Activated naive CD4-positive, alpha-beta T cell treated with anti-CD3 and anti-CD28 coated beads for 36 hours (primary cell): ENCODE measurements at regions of chr10 and their contacts with region 1.

Region 1: GRCh38 chr10:121886997-121887622 is 40.7 kb downstream of the ATE1 start:
- DNase-seq: peak; percentile 73
- H3K4me3 Mint-ChIP-seq: no peak overlapping the region
- H3K27ac Mint-ChIP-seq: no peak overlapping the region
- H3K4me1 Mint-ChIP-seq: peaks cover 3% of the 10 kb centered on the region
- H3K27me3 Mint-ChIP-seq: no peaks in the 10 kb centered on the region

Region 2: DNA sequence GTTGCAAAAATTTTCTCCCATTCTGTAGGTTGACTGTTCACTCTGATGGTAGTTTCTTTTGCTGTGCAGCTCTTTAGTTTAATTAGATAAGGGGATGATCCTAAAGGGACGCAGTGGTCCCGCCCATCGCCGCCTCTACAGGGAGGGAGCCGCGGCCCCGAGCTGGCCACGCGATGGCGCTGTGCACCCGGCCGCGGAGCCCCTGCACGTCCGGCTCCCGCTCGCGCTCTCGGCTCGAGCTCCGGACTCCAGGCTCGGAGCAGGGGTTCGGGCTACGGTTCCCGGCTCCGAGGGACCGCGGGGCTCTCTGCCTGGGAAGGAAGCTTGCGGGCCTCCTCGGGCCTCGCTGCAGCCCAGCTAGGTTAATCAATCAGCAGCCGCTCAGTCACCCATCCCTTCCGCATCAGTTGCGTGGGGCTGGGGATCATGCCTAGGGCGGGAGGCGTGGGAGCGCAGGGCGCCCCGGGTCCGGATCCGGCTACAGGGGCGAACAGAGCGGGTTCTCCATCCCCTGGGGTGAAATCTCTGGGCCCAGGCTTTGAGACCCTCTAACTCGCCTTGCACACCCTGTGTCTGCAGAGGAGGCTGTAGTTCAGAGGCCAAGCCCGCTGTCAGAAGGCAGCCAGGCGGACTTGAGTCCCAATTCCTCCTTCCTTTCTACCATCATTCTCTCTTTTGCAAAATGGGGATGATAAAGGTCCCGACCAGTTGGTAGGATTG is 938.1 kb before region 1 on chr10:
- CTCF ChIA-PET with region 1: interaction called, 4 read pairs
- intact Hi-C with region 1: loop called (anchors 2 kb)
- DNase-seq: peak; percentile 68
- H3K4me3 Mint-ChIP-seq: no peak overlapping the region
- H3K27ac Mint-ChIP-seq: no peak overlapping the region
- H3K4me1 Mint-ChIP-seq: peaks cover 7% of the 10 kb centered on the region
- H3K27me3 Mint-ChIP-seq: peaks cover 44% of the 10 kb centered on the region

Region 3: GRCh38 chr10:121598207-121598862 is 288.8 kb before region 1 on chr10 and contains the start of gene FGFR2:
- CTCF ChIA-PET with region 1: no interaction called
- intact Hi-C with region 1: loop called (anchors 5 kb)
- DNase-seq: peak; percentile 27
- H3K4me3 Mint-ChIP-seq: no peak within 1 kb of the TSS
- H3K27ac Mint-ChIP-seq: no peak within 1 kb of the TSS
- H3K4me1 Mint-ChIP-seq: peaks cover 4% of the 10 kb centered on the region
- H3K27me3 Mint-ChIP-seq: peaks cover 53% of the 10 kb centered on the region
- total RNA-seq, gene FGFR2: not detected

Region 4: GRCh38 chr10:121734589-121735045 is 152.5 kb before region 1 on chr10:
- CTCF ChIA-PET with region 1: interaction called, 4 read pairs
- intact Hi-C with region 1: loop called (anchors 2 kb)
- DNase-seq: peak; percentile 25
- H3K4me3 Mint-ChIP-seq: no peak overlapping the region
- H3K27ac Mint-ChIP-seq: no peak overlapping the region
- H3K4me1 Mint-ChIP-seq: peaks cover 7% of the 10 kb centered on the region
- H3K27me3 Mint-ChIP-seq: peaks cover 39% of the 10 kb centered on the region

Region 5: GRCh38 chr10:121823993-121824463 is 63.1 kb before region 1 on chr10:
- CTCF ChIA-PET with region 1: interaction called, 12 read pairs
- intact Hi-C with region 1: loop called (anchors 1 kb)
- DNase-seq: no peak
- H3K4me3 Mint-ChIP-seq: no peak overlapping the region
- H3K27ac Mint-ChIP-seq: no peak overlapping the region
- H3K4me1 Mint-ChIP-seq: peaks cover 2% of the 10 kb centered on the region
- H3K27me3 Mint-ChIP-seq: no peaks in the 10 kb centered on the region